Naive thymus-derived CD4-positive, alpha-beta T cell (primary cell): ENCODE measurements at regions of chr7 and their contacts with region 1.

Region 1: GRCh38 chr7:2555121-2556052 is at the start of gene BRAT1:
- DNase-seq: peak; percentile 84 to 95 (median 92)
- ATAC-seq: peak; percentile 95
- H3K4me3 ChIP-seq: peak within 1 kb of the TSS; percentile 77
- H3K4me3 Mint-ChIP-seq: peak within 1 kb of the TSS; percentile 77 to 92 (median 88)
- H3K27ac ChIP-seq: peak within 1 kb of the TSS; percentile 100
- H3K27ac Mint-ChIP-seq: peak within 1 kb of the TSS; percentile 48 to 93 (median 85)
- H3K4me1 ChIP-seq: peaks cover 15 to 22% of the 10 kb centered on the region in 2 donors
- H3K4me1 Mint-ChIP-seq: peaks cover 22 to 50% (median 36%) of the 10 kb centered on the region in 7 donors
- H3K27me3 ChIP-seq: no peaks in the 10 kb centered on the region
- H3K27me3 Mint-ChIP-seq: no peaks in the 10 kb centered on the region
- total RNA-seq, gene BRAT1: 24.6 to 45.5 (median 37.0) TPM

Region 2: DNA sequence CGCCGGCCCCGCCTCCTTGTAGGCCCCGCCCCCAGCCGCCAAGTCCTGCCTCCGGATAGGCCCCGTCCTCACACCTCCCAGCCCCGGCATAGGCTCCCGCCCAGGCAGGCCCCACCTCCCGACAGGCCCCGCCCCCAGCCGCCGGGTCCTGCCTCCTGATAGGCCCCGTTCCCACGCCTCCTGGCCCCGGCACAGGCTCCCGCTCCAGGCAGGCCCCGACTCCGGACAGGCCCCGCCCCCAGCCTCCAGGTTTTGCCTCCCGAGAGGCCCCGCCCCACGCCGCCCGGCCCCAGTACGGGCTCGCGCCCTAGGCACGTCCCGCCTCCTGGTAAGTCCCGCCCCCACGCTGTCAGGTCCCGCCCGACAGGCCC is 1095.9 kb before region 1 on chr7:
- CTCF ChIA-PET with region 1: no interaction called
- POLR2A ChIA-PET with region 1: no interaction called
- intact Hi-C with region 1: loop called in 1 of 2 experiments (anchors 1 kb)
- DNase-seq: peak; percentile 98 to 99 (median 99)
- ATAC-seq: peak; percentile 97
- H3K4me3 ChIP-seq: peak overlapping the region; percentile 73
- H3K4me3 Mint-ChIP-seq: peak overlapping the region in 8 of 10 donors; percentile 58 to 75 (median 70)
- H3K27ac ChIP-seq: peak overlapping the region; percentile 55
- H3K27ac Mint-ChIP-seq: peak overlapping the region in 1 of 9 donors; percentile 76
- H3K4me1 ChIP-seq: peaks cover 8 to 14% of the 10 kb centered on the region in 2 donors
- H3K4me1 Mint-ChIP-seq: peaks cover 7 to 25% (median 18%) of the 10 kb centered on the region in 7 donors
- H3K27me3 ChIP-seq: no peaks in the 10 kb centered on the region
- H3K27me3 Mint-ChIP-seq: peaks cover 0 to 5% (median 0%) of the 10 kb centered on the region in 5 donors

Region 3: DNA sequence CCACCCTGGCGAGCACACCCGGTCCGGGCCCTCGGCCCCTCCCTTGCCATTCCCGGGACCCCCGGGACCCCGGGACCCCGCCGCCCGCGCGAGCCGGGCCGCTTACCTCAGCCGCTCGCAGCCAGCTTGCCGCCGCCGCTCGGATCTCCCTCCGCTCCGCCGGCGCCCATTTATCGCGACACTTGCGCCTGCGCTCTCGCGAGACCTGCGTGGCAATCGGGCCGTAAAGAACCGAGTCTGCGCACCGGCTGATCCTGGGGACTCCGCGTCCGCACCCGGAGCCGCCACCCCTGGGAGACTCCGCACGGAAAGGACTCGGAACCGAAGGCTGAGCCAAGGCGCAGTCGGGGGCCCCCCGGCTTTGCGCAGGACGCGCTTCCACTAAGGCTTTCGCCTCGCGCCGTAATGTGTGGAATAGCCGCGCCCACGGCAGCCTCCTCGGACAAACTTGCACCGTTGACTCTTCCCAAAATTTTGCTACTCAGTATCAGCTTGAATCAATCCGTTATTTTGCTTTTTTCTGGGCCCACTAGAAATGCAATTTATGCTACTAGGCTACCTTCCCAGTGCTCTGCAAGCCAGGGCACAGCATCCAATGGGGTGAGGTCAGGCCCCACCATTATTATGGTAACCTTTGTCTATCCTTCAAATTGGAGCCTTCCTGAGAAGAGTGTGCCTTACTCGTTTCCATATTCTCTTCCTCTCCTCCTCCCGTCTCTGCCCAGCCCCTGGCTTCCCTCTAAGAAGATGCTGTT is 322.4 kb before region 1 on chr7 and contains the start of gene MAD1L1:
- CTCF ChIA-PET with region 1: no interaction called
- POLR2A ChIA-PET with region 1: no interaction called
- intact Hi-C with region 1: loop called in 1 of 2 experiments (anchors 5 kb)
- DNase-seq: peak; percentile 75 to 90 (median 88)
- ATAC-seq: peak; percentile 90
- H3K4me3 ChIP-seq: peak within 1 kb of the TSS; percentile 99
- H3K4me3 Mint-ChIP-seq: peak within 1 kb of the TSS; percentile 88 to 98 (median 95)
- H3K27ac ChIP-seq: peak within 1 kb of the TSS; percentile 80
- H3K27ac Mint-ChIP-seq: peak within 1 kb of the TSS; percentile 66 to 91 (median 86)
- H3K4me1 ChIP-seq: peaks cover 13 to 27% of the 10 kb centered on the region in 2 donors
- H3K4me1 Mint-ChIP-seq: peaks cover 16 to 58% (median 31%) of the 10 kb centered on the region in 7 donors
- H3K27me3 ChIP-seq: no peaks in the 10 kb centered on the region
- H3K27me3 Mint-ChIP-seq: no peaks in the 10 kb centered on the region
- total RNA-seq, gene MAD1L1: 112 to 141 (median 125) TPM

Region 4: GRCh38 chr7:2403014-2403717 is 152.2 kb before region 1 on chr7 and contains the start of gene CHST12:
- CTCF ChIA-PET with region 1: no interaction called
- POLR2A ChIA-PET with region 1: no interaction called
- intact Hi-C with region 1: loop called (anchors 1 to 2 kb)
- DNase-seq: peak; percentile 91 to 96 (median 93)
- ATAC-seq: peak; percentile 94
- H3K4me3 ChIP-seq: peak within 1 kb of the TSS; percentile 81
- H3K4me3 Mint-ChIP-seq: peak within 1 kb of the TSS; percentile 80 to 94 (median 89)
- H3K27ac ChIP-seq: peak within 1 kb of the TSS; percentile 70
- H3K27ac Mint-ChIP-seq: peak within 1 kb of the TSS; percentile 60 to 96 (median 84)
- H3K4me1 ChIP-seq: peaks cover 23 to 28% of the 10 kb centered on the region in 2 donors
- H3K4me1 Mint-ChIP-seq: peaks cover 38 to 54% (median 49%) of the 10 kb centered on the region in 7 donors
- H3K27me3 ChIP-seq: no peaks in the 10 kb centered on the region
- H3K27me3 Mint-ChIP-seq: peaks cover 0 to 2% (median 0%) of the 10 kb centered on the region in 5 donors
- total RNA-seq, gene CHST12: 13.3 to 41.6 (median 24.3) TPM

Region 5: DNA sequence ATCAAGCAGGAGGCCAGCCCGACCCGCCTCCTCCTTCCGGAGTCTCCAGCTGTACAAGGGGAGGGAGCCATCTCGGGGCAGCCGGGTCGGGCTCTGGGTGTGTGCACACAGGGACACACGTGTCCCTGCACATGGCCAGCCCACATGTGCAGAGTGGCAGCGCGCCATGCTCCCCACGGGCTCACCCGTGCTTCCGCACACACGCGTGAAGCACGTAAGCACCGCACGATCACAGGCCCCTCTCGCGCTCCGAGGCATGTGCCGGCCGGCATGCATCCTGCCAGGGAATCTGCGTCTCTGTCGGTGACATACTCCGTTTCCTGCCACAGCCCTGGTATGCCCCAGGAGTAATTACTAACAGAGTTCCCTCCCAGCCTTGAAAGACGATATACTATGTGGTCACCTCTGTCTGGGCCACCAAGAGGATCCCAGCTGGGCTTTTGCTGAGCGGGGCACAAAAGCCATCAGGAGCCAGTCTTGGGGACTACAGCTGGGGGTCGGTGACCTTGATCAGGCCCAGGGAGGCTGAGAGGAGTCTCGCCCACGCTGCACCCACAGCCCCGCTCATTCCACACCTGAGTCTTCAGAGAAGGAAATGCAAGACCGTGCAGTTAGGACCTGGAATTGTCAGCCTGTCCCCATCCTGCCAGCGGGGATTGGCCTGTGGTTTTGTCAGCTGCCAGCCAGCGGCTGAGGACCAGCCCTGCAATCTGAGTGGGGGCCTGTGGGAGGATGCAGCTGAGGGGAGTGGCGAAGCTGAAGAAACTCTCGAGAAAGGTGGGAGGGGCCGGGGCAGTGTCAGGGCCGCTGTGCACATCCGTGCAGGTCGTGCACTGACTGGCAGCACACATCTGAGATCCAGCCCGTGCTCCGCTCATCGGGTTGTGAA is 46.8 kb before region 1 on chr7:
- CTCF ChIA-PET with region 1: no interaction called
- POLR2A ChIA-PET with region 1: interaction called, 18 read pairs
- intact Hi-C with region 1: loop called in 1 of 2 experiments (anchors 1 kb)
- DNase-seq: peak; percentile 61 to 94 (median 93)
- ATAC-seq: peak; percentile 76
- H3K4me3 ChIP-seq: peak overlapping the region; percentile 61
- H3K4me3 Mint-ChIP-seq: peak overlapping the region in 9 of 10 donors; percentile 69 to 88 (median 84)
- H3K27ac ChIP-seq: peak overlapping the region; percentile 87
- H3K27ac Mint-ChIP-seq: peak overlapping the region in 7 of 9 donors; percentile 86 to 99 (median 97)
- H3K4me1 ChIP-seq: peaks cover 58 to 61% of the 10 kb centered on the region in 2 donors
- H3K4me1 Mint-ChIP-seq: peaks cover 36 to 69% (median 50%) of the 10 kb centered on the region in 7 donors
- H3K27me3 ChIP-seq: no peaks in the 10 kb centered on the region
- H3K27me3 Mint-ChIP-seq: no peaks in the 10 kb centered on the region

Region 6: DNA sequence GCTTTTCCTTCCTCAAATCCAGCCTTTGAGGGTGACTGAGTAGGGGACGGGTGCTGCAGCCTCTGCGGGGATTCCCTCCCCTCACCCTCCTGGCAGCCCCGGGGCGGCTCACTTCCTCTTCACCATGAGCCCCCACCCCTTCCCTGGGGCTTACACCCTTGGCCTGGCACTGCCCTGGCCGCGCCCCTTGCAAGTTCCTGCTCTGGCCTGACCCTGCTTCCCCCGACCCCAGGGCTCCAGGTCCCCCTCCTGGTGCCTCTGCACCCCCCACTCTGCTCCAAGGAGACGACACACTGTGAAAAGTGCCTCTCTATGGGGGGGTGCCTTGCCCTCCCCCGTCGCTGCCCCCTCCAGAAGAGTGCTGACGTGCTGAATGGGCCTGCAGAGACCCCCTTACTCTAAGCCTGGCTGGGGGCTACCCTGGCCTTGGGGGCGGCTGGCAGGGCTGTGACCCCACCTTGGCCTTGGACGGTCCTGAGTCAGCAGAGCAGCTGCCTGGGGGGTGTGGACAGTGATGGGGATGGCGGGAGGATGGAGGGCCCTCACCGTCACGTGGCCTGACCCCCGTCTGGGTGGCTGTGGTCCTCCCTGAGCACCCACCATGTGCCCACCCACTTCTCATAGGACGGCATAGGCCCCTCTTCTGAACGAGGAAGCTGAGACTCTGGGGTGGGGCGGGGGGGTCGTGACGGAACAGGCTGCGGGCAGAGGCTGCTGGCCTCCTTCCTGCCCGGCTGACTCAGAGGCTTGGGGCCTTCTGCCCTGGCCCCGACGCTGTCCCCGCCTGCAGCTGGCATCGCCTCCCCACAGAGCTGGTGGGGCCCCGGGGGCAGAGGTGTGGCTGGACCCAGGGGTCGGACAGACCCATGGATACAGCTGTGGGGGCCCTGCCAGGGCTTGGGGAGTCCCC is 26.0 kb before region 1 on chr7:
- CTCF ChIA-PET with region 1: interaction called, 5 read pairs
- POLR2A ChIA-PET with region 1: interaction called, 9 read pairs
- intact Hi-C with region 1: loop called (anchors 1 to 2 kb)
- DNase-seq: peak in 7 of 9 donors; percentile 24 to 76 (median 52)
- ATAC-seq: peak; percentile 67
- H3K4me3 ChIP-seq: peak overlapping the region; percentile 57
- H3K4me3 Mint-ChIP-seq: peak overlapping the region; percentile 65 to 82 (median 76)
- H3K27ac ChIP-seq: peak overlapping the region; percentile 76
- H3K27ac Mint-ChIP-seq: peak overlapping the region; percentile 66 to 96 (median 91)
- H3K4me1 ChIP-seq: peaks cover 40 to 62% of the 10 kb centered on the region in 2 donors
- H3K4me1 Mint-ChIP-seq: peaks cover 33 to 58% (median 44%) of the 10 kb centered on the region in 7 donors
- H3K27me3 ChIP-seq: no peaks in the 10 kb centered on the region
- H3K27me3 Mint-ChIP-seq: no peaks in the 10 kb centered on the region

Region 7: DNA sequence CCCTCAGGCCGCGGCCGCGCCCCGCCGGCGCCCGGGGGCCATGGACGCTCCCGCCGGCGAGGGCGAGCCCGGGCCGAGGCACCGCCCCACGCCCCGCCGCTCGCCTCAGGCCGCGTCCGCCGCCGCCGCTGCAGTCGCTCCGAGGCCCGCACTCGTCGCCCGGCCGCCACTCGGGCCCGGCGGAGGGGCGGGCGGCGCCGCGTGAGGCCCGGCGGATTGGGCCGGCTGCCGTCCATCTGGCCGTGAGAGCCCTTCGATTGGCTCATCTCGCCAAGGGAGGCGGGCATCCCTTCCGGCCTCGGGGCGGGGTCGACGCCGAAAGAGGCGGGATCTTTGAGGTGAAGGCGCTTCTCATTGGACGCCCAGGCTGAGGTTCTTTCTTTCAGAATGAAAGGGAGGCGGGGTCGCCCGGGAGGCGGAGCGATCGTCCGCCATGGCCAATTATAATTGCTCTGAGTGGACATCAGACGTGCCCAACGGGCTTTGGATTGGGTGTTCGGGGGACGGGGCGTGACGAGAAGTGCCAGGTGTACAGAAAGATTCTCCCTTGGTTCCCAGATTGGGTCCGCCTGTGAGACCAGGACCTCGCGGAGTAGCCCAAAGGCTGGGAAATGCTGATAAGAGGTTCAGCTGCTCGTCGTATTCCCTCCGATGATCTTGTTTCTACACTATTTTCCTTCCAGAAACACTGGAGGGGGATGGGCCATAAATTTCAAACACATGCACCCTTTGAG is 288.9 kb after region 1 on chr7 and contains the start of gene GNA12:
- CTCF ChIA-PET with region 1: no interaction called
- POLR2A ChIA-PET with region 1: no interaction called
- intact Hi-C with region 1: loop called in 1 of 2 experiments (anchors 5 kb)
- DNase-seq: peak; percentile 94 to 98 (median 98)
- ATAC-seq: peak; percentile 97
- H3K4me3 ChIP-seq: peak within 1 kb of the TSS; percentile 70
- H3K4me3 Mint-ChIP-seq: peak within 1 kb of the TSS; percentile 86 to 98 (median 91)
- H3K27ac ChIP-seq: peak within 1 kb of the TSS; percentile 59
- H3K27ac Mint-ChIP-seq: peak within 1 kb of the TSS; percentile 2 to 89 (median 78)
- H3K4me1 ChIP-seq: peaks cover 12% of the 10 kb centered on the region in 2 donors
- H3K4me1 Mint-ChIP-seq: peaks cover 19 to 49% (median 44%) of the 10 kb centered on the region in 7 donors
- H3K27me3 ChIP-seq: no peaks in the 10 kb centered on the region
- H3K27me3 Mint-ChIP-seq: no peaks in the 10 kb centered on the region
- total RNA-seq, gene GNA12: 18.1 to 25.7 (median 21.0) TPM